ENCODE measurements at regions of chr11 and their contacts with region 1.

Region 1: GRCh38 chr11:8020244-8020597 is 33.1 kb downstream of the EIF3F start:
- DNase-seq: no peak
- H3K4me3 Mint-ChIP-seq: peak overlapping the region; percentile 39
- H3K27ac Mint-ChIP-seq: no peak overlapping the region
- H3K4me1 Mint-ChIP-seq: peaks cover 13% of the 10 kb centered on the region
- H3K27me3 Mint-ChIP-seq: peaks cover 45% of the 10 kb centered on the region

Region 2: GRCh38 chr11:7851391-7851790 is 168.8 kb before region 1 on chr11:
- CTCF ChIA-PET with region 1: no interaction called
- POLR2A ChIA-PET with region 1: no interaction called
- DNase-seq: no peak
- H3K4me3 Mint-ChIP-seq: no peak overlapping the region
- H3K27ac Mint-ChIP-seq: no peak overlapping the region
- H3K4me1 Mint-ChIP-seq: no peaks in the 10 kb centered on the region
- H3K27me3 Mint-ChIP-seq: no peaks in the 10 kb centered on the region

Region 3: GRCh38 chr11:8033305-8034105 is 13.3 kb after region 1 on chr11:
- CTCF ChIA-PET with region 1: interaction called, 11 read pairs
- POLR2A ChIA-PET with region 1: no interaction called
- DNase-seq: peak; percentile 49
- H3K4me3 Mint-ChIP-seq: no peak overlapping the region
- H3K27ac Mint-ChIP-seq: no peak overlapping the region
- H3K4me1 Mint-ChIP-seq: peaks cover 2% of the 10 kb centered on the region
- H3K27me3 Mint-ChIP-seq: peaks cover under 1% of the 10 kb centered on the region

Region 4: GRCh38 chr11:8070417-8071115 is 50.3 kb after region 1 on chr11:
- CTCF ChIA-PET with region 1: no interaction called
- POLR2A ChIA-PET with region 1: no interaction called
- DNase-seq: no peak
- H3K4me3 Mint-ChIP-seq: no peak overlapping the region
- H3K27ac Mint-ChIP-seq: no peak overlapping the region
- H3K4me1 Mint-ChIP-seq: no peaks in the 10 kb centered on the region
- H3K27me3 Mint-ChIP-seq: peaks cover 7% of the 10 kb centered on the region